ENCODE measurements at regions of chr22 and their contacts with region 1.

Region 1: DNA sequence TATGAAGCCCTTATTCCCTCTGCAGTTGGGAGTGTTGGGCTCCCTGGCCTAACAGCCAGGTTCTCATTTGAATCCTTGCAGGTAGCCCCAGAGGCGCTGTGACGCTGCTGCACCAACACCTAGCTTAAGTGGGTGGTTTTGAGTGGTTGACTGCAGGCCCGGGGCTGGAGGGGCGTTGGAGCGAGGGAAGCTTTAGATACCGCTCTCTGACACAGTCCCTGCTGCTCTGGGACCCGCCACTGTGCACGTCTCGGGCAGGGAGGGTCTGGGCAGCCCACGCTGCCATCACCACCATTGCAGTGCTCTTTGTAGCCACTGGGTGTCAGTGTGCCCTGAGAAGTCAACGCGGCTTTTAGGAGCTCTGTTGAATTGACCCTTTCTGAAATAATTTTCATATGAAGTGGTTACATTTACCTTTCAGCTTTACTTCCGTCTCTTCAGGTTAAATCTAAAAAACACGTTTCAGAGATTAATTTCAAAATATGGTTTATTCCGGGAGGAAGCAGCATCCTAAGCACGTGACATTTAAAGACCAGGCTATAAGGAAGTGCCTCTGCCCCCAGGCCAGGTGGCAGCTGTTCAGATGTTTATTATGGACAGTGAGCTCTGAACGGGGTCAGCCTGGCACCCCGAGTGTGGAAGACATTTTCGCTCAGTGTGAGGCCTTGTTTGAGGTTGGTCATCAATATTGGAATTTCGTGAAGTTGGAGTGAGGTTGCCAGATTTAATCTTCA is 30.9 kb upstream of the PARVB start:
- DNase-seq: peak; percentile 37 to 81 (median 50)
- ATAC-seq: peak; percentile 85
- H3K4me3 ChIP-seq: no peak overlapping the region
- H3K4me3 Mint-ChIP-seq: peak overlapping the region; percentile 74
- H3K27ac ChIP-seq: no peak overlapping the region
- H3K27ac Mint-ChIP-seq: peak overlapping the region; percentile 80
- H3K4me1 ChIP-seq: peaks cover 29% of the 10 kb centered on the region
- H3K4me1 Mint-ChIP-seq: peaks cover 35% of the 10 kb centered on the region
- H3K27me3 ChIP-seq: no peaks in the 10 kb centered on the region
- H3K27me3 Mint-ChIP-seq: no peaks in the 10 kb centered on the region
- CTCF ChIP-seq: peak; percentile 95

Region 2: DNA sequence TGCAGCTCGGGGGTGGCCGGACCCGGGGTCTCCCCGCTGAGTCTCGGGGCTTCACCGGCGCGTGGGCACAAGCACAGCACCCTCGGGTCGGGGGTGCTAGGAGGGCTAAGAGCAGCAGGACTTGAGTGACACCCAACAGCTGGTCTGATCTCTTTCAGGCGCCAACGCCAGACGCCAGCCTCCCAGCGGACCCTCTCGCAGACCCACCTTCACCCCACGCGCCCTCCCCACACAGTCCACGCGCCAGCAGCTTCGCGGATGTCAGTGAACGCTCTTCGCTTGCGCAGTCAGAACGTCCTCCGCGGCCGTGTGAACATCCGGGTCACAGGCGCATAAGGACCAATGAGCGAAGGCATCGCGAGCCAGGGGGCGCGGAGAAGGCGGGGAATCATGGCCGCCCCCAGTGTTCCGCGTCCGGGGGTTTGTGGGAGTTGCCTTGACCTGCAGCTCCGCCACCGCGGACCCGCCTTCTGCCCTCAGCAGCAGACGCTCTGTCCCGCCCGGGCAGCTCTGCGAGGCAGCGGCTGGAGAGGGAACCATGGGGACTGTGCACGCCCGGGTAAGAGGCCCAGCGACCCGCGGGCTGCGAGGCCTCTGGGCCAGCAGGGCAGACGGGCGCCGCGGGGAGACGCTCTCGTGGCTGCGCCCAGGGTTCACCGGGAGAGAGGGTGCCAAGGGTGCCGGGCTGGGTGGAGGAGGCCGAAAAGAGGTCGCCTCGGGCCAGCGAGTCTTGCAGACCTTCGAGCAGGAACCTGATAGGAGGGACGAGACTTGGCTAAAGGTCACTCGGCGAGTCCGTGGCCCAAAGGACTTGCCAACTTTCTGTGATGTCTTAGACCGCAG is 37.9 kb before region 1 on chr22 and contains the start of gene SAMM50:
- CTCF ChIA-PET with region 1: interaction called, 4 read pairs
- POLR2A ChIA-PET with region 1: interaction called, 3 read pairs
- intact Hi-C with region 1: loop called in 1 of 2 experiments (anchors 2 kb)
- DNase-seq: peak; percentile 82 to 95 (median 86)
- ATAC-seq: peak; percentile 96
- H3K4me3 ChIP-seq: peak within 1 kb of the TSS; percentile 95
- H3K4me3 Mint-ChIP-seq: peak within 1 kb of the TSS; percentile 98
- H3K27ac ChIP-seq: peak within 1 kb of the TSS; percentile 53 to 68
- H3K27ac Mint-ChIP-seq: peak within 1 kb of the TSS; percentile 89
- H3K4me1 ChIP-seq: peaks cover 31% of the 10 kb centered on the region
- H3K4me1 Mint-ChIP-seq: peaks cover 51% of the 10 kb centered on the region
- H3K27me3 ChIP-seq: no peaks in the 10 kb centered on the region
- H3K27me3 Mint-ChIP-seq: no peaks in the 10 kb centered on the region
- CTCF ChIP-seq: no peak
- total RNA-seq, gene SAMM50: 15.2 to 18.0 TPM

Region 3: DNA sequence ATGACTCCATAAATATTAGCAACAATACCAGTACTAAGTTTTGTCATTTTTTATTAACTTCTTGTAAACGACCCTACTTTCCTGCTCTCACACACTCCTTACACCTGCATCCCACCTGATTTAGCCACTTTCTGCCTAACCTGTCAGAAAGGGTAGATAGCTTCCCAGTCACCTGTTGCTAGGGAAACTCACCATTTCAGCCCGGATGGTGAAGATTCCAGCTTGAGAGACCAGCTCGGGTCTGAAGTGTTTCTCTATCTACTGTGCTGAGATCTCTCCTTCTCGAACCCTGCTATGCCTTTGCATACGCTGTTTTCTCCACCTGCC is 187.5 kb after region 1 on chr22 and contains the start of gene PARVG:
- CTCF ChIA-PET with region 1: interaction called, 10 read pairs
- POLR2A ChIA-PET with region 1: interaction called, 4 read pairs
- intact Hi-C with region 1: loop called in 1 of 2 experiments (anchors 10 kb)
- DNase-seq: peak in 12 of 14 experiments; percentile 19 to 84 (median 39)
- ATAC-seq: peak; percentile 58
- H3K4me3 ChIP-seq: peak within 1 kb of the TSS; percentile 88
- H3K4me3 Mint-ChIP-seq: peak within 1 kb of the TSS; percentile 85
- H3K27ac ChIP-seq: peak within 1 kb of the TSS; percentile 75 to 77
- H3K27ac Mint-ChIP-seq: peak within 1 kb of the TSS; percentile 88
- H3K4me1 ChIP-seq: peaks cover 31% of the 10 kb centered on the region
- H3K4me1 Mint-ChIP-seq: peaks cover 40% of the 10 kb centered on the region
- H3K27me3 ChIP-seq: no peaks in the 10 kb centered on the region
- H3K27me3 Mint-ChIP-seq: no peaks in the 10 kb centered on the region
- CTCF ChIP-seq: no peak
- total RNA-seq, gene PARVG: 142 to 146 TPM

Region 4: GRCh38 chr22:44567846-44568493 is 574.8 kb after region 1 on chr22:
- CTCF ChIA-PET with region 1: interaction called, 3 read pairs
- POLR2A ChIA-PET with region 1: interaction called, 3 read pairs
- intact Hi-C with region 1: loop called (anchors 1 to 2 kb)
- DNase-seq: peak; percentile 17 to 73 (median 38)
- ATAC-seq: no peak
- H3K4me3 ChIP-seq: no peak overlapping the region
- H3K4me3 Mint-ChIP-seq: no peak overlapping the region
- H3K27ac ChIP-seq: no peak overlapping the region
- H3K27ac Mint-ChIP-seq: no peak overlapping the region
- H3K4me1 ChIP-seq: no peaks in the 10 kb centered on the region
- H3K4me1 Mint-ChIP-seq: no peaks in the 10 kb centered on the region
- H3K27me3 ChIP-seq: no peaks in the 10 kb centered on the region
- H3K27me3 Mint-ChIP-seq: no peaks in the 10 kb centered on the region
- CTCF ChIP-seq: peak; percentile 62

Region 5: GRCh38 chr22:44735540-44736488 is 742.6 kb after region 1 on chr22:
- CTCF ChIA-PET with region 1: no interaction called
- POLR2A ChIA-PET with region 1: no interaction called
- intact Hi-C with region 1: loop called in 1 of 2 experiments (anchors 2 kb)
- DNase-seq: peak; percentile 71 to 91 (median 81)
- ATAC-seq: peak; percentile 81
- H3K4me3 ChIP-seq: no peak overlapping the region
- H3K4me3 Mint-ChIP-seq: no peak overlapping the region
- H3K27ac ChIP-seq: no peak overlapping the region
- H3K27ac Mint-ChIP-seq: no peak overlapping the region
- H3K4me1 ChIP-seq: peaks cover 7% of the 10 kb centered on the region
- H3K4me1 Mint-ChIP-seq: peaks cover 4% of the 10 kb centered on the region
- H3K27me3 ChIP-seq: no peaks in the 10 kb centered on the region
- H3K27me3 Mint-ChIP-seq: no peaks in the 10 kb centered on the region
- CTCF ChIP-seq: peak; percentile 98

Measured in CD4-positive, alpha-beta T cell (primary cell).